ENCODE measurements at regions of chr12 and their contacts with region 1.

Region 1: DNA sequence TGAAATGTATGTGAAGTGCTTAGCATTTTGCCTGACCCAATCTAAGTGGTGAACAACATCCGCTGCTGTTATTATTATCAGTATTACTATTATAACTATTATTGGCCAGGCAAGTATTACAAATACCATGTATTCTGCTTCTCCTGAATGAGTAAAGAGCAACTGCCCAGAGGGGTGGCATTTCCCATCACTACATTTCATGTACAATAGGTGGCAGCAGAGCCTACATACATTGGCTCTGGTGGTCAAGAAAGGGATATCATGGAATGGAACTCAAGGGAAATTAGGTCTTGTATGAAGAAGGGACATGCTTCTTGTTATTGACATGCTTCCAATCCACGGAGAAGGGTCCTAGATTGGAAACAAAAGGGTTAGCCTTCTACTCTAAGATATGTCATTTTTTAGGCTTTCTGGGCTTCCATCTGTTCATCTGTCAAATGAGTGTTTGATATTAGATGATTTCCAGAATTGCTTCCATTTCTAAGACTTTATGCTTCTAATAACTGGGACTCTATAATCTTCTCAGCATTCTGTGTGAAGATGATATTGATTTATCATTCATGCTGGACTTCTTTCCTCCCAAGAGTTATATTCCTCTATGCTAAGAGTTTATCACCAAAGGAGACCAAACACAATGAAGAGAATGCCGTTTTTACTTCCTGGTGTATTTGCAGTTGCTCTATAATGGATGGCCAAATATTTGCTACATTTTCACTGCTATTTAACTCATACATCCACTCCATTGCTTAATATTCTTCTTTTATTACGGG is 239.1 kb downstream of the SSPN start:
- DNase-seq: peak; percentile 29 to 40
- H3K4me3 ChIP-seq: no peak overlapping the region
- H3K27ac ChIP-seq: no peak overlapping the region
- H3K4me1 ChIP-seq: no peaks in the 10 kb centered on the region
- H3K27me3 ChIP-seq: no peaks in the 10 kb centered on the region
- CTCF ChIP-seq: peak; percentile 11 to 100 (median 86)
- POLR2A ChIP-seq: no peak

Region 2: DNA sequence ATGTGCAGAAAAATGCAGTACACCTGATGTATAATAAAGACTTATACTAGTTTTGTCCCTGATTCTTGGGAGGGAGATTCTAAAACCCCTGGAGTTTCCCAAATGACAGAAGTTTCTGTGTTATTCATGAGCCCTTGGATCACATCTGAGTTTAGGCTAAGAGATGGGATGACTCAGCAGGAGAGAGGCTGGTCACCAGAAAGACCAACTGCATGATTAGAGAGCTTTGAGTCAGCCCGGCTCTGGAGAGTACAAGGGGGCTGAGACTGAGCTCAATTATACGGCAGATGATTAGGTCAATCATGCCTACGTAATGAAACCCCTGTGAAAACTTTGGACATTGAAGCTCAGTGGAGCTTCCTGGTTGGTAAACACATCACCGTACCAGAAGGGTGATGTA is 64.9 kb before region 1 on chr12:
- intact Hi-C with region 1: no loop called
- DNase-seq: peak in 1 of 2 donors; percentile 4
- H3K4me3 ChIP-seq: no peak overlapping the region
- H3K27ac ChIP-seq: no peak overlapping the region
- H3K4me1 ChIP-seq: no peaks in the 10 kb centered on the region
- H3K27me3 ChIP-seq: no peaks in the 10 kb centered on the region
- CTCF ChIP-seq: no peak
- POLR2A ChIP-seq: no peak

Region 3: DNA sequence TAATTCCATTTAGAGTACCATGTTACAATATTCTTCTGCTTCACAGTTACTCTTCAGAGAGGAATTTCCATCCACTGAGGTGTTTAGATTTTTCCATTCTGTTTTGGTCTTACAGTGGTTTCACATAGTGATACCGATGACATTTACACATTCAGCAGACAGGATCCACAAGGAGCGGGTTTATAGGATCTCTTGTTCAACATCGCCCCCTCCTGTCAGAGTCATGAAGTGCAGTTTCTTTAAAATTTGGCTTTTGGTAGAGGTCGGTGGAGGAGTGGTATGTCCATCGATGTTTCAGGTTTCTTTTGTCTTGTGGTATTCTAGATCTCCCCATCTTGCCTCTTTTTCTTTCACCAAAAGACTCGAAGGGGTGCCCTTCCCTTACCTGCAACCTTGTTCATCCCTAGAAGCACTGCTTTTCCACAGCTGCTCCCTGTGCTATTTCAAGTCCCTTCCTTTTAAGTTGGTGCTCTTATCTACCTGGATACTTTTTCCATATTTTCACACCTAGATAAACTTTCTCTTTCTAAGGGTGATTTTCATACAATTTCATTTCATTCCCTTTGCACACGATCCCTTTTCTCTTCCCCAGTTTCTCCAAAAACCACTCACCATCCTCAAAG is 217.2 kb after region 1 on chr12:
- intact Hi-C with region 1: loop called (anchors 5 kb)
- DNase-seq: peak; percentile 44 to 47
- H3K4me3 ChIP-seq: no peak overlapping the region
- H3K27ac ChIP-seq: no peak overlapping the region
- H3K4me1 ChIP-seq: no peaks in the 10 kb centered on the region
- H3K27me3 ChIP-seq: no peaks in the 10 kb centered on the region
- CTCF ChIP-seq: peak; percentile 15 to 83 (median 72)
- POLR2A ChIP-seq: no peak

Measured in thyroid gland (tissue), 4 donors.